OCI-LY7 (cell line): ENCODE measurements at regions of chr15 and their contacts with region 1.

Region 1: GRCh38 chr15:90001683-90002427 is 731 bp downstream of the ZNF710 start:
- DNase-seq: peak; percentile 57
- H3K4me3 ChIP-seq: peak overlapping the region; percentile 80
- H3K27ac ChIP-seq: no peak overlapping the region
- H3K4me1 ChIP-seq: peaks cover 38% of the 10 kb centered on the region
- CTCF ChIP-seq: no peak

Region 2: DNA sequence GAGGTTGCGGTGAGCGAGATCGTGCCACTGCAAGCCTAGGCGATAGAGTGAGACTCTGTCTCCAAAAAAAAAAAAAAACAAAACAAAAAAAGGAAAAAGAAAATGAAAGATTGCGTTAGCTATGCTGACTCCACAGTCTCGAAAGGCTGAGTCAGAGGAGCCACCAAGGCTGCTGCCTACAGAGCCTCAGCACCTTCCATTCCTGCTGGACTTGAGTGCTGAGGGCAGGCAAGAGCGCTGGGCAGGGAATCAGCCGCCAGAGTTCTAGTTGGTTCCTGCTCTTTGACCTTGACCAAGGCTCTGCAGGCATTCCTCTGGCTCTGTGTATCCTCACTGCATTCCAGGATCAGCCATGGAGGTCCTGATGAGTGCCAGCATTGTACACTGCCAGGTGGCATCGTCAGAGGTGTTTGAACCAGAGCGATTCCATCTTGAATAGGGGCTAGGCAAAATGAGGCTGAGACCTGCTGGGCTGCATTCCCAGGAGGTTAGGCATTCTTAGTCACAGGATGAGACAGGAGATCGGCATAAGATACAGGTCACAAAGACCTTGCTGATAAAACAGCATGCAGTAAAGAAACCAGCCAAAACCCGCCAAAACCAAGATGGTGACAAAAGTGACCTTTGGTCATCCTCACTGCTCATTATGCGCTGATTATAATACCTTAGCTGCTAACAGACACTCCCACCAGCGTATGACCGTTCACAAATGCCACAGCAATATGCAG is 219.8 kb before region 1 on chr15:
- CTCF ChIA-PET with region 1: no interaction called
- POLR2A ChIA-PET with region 1: no interaction called
- intact Hi-C with region 1: no loop called
- DNase-seq: no peak
- H3K4me3 ChIP-seq: no peak overlapping the region
- H3K27ac ChIP-seq: no peak overlapping the region
- H3K4me1 ChIP-seq: no peaks in the 10 kb centered on the region
- CTCF ChIP-seq: no peak

Region 3: DNA sequence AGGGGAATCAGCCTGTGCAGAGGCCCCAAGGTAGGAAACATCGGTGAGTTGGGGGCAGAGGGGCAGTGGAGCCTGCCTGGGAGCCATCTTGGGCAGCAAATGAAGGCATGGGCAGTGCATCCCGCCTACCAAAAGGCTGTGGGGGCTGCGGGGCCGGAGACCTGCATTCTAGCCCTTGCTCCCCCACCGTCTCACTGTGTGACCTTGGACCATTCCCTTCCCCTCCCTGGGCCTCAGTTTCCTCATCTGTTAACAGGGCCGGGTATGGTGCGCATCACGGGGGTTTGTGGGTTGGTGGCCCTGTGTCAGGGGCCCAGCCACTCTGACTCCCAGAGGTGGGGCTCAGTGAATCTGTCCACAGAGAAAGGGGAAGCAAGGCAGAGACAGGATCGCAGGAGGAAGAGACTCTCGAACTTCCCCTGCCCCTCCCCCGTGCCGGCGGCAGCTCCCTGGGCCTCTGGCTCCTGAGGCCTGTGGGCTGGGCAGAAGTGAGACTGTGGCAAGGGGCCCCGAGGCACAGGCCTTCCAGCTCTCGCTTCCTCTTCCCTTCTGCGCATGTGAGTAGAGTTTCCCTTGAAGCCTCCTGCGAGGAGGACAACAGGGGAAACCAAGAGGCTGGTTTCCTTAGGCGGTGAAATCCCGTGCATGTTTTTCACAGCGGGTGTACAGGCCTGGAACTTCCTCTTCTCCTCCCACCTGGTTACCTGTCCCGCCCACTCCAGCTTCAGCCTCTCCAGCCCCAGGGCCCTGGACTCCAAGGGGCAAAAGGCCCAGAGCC is 57.5 kb after region 1 on chr15:
- CTCF ChIA-PET with region 1: interaction called, 5 read pairs
- POLR2A ChIA-PET with region 1: interaction called, 3 read pairs
- intact Hi-C with region 1: loop called (anchors 1 kb)
- DNase-seq: peak; percentile 95
- H3K4me3 ChIP-seq: peak overlapping the region; percentile 33
- H3K27ac ChIP-seq: peak overlapping the region; percentile 83
- H3K4me1 ChIP-seq: peaks cover 66% of the 10 kb centered on the region
- CTCF ChIP-seq: no peak

Region 4: DNA sequence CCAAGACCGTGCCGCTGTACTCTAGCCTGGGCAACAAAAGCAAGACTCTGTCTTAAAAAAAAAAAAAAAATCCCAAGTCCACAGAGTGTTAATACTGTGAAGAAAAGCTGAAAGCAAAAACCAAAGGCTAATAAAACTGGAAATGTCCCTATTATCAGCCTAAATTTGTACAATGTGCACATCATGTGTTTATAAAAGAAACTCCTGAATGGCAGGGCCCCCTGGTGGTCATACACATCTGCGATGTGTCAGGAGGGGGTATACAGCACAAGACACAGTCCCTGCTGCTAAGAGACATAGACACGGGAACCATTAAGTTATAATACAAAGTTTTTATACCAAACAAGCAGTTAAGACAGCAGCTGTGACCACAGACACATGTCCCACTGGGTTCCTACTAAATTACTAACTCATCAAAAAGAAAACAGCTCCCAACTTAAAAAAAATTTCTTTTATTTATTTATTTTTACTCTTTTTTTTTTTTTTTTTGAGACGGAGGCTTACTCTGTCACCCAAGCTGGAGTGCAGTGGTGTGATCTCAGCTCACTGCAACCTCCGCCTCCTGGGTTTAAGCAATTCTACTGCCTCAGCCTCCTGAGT is 69.5 kb after region 1 on chr15:
- CTCF ChIA-PET with region 1: no interaction called
- POLR2A ChIA-PET with region 1: no interaction called
- intact Hi-C with region 1: loop called (anchors 1 kb)
- DNase-seq: peak; percentile 88
- H3K4me3 ChIP-seq: no peak overlapping the region
- H3K27ac ChIP-seq: no peak overlapping the region
- H3K4me1 ChIP-seq: peaks cover 20% of the 10 kb centered on the region
- CTCF ChIP-seq: peak; percentile 95